ENCODE measurements at regions of chr6 and their contacts with region 1.

Region 1: GRCh38 chr6:24274441-24275083 is 83.3 kb downstream of the DCDC2 start:
- DNase-seq: no peak
- ATAC-seq: no peak
- H3K4me3 ChIP-seq: no peak overlapping the region
- H3K27ac ChIP-seq: no peak overlapping the region
- H3K4me1 ChIP-seq: no peaks in the 10 kb centered on the region
- H3K27me3 ChIP-seq: peaks cover 16% of the 10 kb centered on the region; the same call in 1 of the 2 replicates
- CTCF ChIP-seq: peak; percentile 39 to 60 (median 47); a peak in 5 of 6 replicates
- POLR2A ChIP-seq: no peak
- RAD21 ChIP-seq: peak; percentile 57

Region 2: GRCh38 chr6:24064082-24064481 is 210.5 kb before region 1 on chr6:
- CTCF ChIA-PET with region 1: interaction called, 16 read pairs
- POLR2A ChIA-PET with region 1: no interaction called
- RAD21 ChIA-PET with region 1: no interaction called
- intact Hi-C with region 1: loop called (anchors 2 kb)
- DNase-seq: peak; percentile 15
- ATAC-seq: peak; percentile 63
- H3K4me3 ChIP-seq: no peak overlapping the region
- H3K27ac ChIP-seq: no peak overlapping the region
- H3K4me1 ChIP-seq: no peaks in the 10 kb centered on the region
- H3K27me3 ChIP-seq: no peaks in the 10 kb centered on the region
- CTCF ChIP-seq: peak; percentile 31 to 56 (median 31); a peak in 4 of 6 replicates
- POLR2A ChIP-seq: no peak
- RAD21 ChIP-seq: peak; percentile 60

Region 3: DNA sequence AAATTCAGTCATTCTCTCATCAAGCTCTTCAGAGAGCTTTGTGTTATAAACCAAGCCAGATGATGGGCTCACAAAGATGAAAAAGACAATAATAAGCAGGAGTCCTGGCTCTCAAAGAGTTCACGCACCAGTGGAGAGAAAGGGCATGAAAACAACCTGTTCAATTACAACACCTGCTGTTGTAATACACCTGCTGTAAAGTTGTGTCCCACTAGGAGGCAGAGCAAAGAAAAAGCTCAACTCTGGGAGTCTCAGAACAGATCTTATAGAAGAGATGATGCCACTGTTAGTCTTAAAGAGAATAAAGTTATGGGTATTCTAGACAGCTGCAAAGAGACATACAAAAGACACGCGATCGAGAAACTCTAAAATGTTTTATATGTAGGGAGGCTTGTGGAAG is 17.3 kb before region 1 on chr6:
- CTCF ChIA-PET with region 1: interaction called, 13 read pairs
- POLR2A ChIA-PET with region 1: no interaction called
- RAD21 ChIA-PET with region 1: no interaction called
- intact Hi-C with region 1: no loop called
- DNase-seq: peak; percentile 13
- ATAC-seq: peak; percentile 70
- H3K4me3 ChIP-seq: no peak overlapping the region
- H3K27ac ChIP-seq: no peak overlapping the region
- H3K4me1 ChIP-seq: no peaks in the 10 kb centered on the region
- H3K27me3 ChIP-seq: no peaks in the 10 kb centered on the region
- CTCF ChIP-seq: peak in 2 of 3 experiments; percentile 39 to 41; a peak in 3 of 6 replicates
- POLR2A ChIP-seq: no peak
- RAD21 ChIP-seq: no peak

Measured in HCT116 (cell line).